Left ventricle myocardium superior (tissue), 1 donor: ENCODE measurements at regions of chr2 and their contacts with region 1.

Region 1: DNA sequence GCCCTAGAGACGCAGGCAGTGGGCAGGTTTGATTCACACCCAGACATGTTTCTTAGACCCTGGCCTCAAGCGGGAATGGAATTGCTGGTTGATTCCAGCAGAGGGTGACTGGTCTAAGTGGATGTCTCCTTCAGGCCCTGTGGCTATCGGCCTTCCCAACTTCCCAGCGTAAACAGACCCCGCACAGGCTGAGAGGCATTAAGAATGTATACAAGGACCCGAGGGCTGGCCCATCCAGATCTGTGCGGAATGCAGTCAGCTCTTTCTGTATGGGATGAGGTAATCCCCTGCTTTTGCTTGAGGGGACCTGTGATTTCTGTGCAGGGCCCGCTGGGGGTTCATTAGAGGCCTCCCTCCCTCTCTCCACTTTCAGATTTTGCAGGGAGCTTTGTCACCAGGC is 6.5 kb downstream of the ACKR3 start:
- DNase-seq: no peak
- ATAC-seq: peak; percentile 12

Region 2: GRCh38 chr2:236526455-236527158 is 49.5 kb before region 1 on chr2:
- intact Hi-C with region 1: no loop called
- DNase-seq: no peak
- ATAC-seq: no peak

Region 3: DNA sequence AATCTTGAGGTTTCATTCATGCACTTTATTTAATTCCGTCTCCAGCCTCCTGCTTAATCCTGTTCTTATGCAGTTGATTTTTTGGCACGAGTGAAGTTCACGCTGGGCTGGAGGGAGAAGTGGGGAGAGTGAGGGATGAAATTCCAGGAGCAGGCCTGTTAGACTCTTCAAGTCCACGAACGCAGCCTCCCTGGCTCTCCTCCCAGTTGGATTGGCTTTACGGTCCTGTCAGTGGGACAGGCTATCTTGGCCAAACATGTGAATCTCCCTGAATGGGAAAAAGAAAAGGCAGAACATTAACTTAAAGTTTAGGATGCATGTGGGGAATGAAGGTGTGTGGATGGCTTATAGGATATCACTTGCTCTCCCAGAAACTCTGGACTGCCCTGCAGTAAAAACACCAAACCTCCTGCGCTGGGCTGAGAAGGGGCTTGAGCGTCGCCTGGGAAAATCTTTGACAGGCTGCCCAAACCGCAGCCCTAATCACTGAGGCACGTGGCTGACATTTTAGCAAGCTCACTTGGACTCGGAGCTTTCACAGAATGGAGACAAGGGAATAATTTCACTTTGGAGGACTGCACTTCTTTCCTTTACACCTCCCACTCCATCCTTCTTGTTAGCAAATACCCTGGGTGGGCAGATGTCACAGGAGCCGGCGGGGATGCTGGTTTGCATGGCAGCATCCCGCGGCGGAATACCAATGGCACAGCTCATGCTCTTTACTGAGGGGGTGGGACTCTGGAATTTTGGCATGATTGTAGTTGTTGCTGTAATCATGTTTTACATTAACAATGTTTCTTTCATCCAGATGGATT is 87.4 kb after region 1 on chr2:
- intact Hi-C with region 1: no loop called
- DNase-seq: peak; percentile 81
- ATAC-seq: peak; percentile 70

Region 4: DNA sequence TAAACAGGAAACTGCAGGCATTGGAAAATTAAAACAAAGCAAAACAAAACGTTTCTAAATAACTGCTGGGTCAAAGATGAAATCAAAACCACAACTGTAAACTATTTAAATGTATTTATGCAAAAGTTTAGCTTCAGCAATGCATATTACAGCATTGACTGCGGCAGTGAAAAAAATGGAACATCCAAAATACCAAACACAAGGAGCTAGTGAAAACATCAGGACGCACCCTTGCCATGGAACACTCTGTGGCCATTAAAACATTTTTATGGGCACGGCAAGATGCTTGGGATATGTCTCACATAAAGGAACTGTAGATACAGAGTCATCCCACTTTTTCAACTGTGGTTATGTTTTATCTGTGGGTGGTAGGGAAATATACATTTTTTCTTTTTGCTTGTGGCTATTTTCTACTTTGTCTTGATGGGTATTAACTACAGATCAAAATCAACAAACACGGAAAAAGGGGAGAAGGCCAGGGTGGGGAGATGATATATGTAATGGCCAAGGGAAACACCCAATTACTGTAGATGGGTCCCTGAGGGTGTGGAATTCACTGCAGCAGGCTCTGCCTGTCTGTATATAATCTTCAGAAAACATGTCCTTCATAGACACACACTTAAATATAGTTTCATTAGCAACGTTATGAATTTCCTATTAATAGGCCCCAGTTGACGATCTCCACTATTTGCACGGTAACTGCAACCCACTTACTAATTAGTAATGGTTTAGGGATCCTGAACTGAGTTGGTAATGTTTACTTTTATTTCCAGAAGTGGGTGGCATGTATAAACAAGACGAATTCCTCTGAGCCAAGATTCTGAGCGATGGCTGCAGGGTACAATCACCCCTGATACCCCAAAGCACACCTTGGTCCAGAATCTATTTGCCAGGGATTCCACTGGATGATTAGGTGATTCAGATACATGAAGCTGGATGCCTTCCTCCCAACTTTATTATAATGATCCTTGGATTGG is 104.1 kb after region 1 on chr2:
- intact Hi-C with region 1: loop called (anchors 10 kb)
- DNase-seq: no peak
- ATAC-seq: no peak

Region 5: DNA sequence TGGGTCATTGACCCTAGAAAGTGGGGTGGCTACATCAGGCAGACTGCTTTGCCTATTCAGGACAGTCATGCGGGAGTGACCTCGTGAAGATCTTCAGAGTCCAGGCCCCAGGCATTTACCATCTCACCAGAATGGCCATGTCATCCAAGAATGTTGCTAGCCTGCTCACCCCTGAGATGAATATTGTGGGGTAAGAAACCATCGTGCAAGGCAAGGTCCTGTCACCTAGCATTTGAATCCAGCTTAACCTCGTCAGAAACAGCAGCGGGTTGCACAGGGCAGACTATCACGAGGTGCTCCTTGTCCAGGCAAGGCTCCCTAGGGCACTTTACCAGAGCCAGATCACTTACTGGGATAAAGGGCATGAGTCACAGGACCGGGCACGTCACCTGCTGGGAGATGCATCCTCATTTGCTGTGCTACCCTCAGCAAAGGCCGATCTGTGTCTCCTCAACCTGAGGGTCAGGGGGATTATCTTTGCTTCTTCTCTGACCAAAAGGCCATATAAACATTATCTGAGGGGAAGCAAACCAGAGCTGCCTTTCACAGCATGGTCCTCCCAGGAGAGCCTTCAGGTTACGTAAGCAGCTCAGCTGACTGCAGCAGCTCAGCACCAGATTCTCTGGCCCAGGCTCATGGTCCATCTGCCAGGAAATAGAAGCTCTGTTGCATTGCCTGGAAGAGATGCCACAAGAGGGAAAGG is 155.9 kb after region 1 on chr2:
- intact Hi-C with region 1: loop called (anchors 10 kb)
- DNase-seq: peak; percentile 81
- ATAC-seq: peak; percentile 96